Activated CD4-positive, alpha-beta T cell treated with anti-CD3 and anti-CD28 coated beads for 36 hours (primary cell): ENCODE measurements at regions of chr18 and their contacts with region 1.

Region 1: DNA sequence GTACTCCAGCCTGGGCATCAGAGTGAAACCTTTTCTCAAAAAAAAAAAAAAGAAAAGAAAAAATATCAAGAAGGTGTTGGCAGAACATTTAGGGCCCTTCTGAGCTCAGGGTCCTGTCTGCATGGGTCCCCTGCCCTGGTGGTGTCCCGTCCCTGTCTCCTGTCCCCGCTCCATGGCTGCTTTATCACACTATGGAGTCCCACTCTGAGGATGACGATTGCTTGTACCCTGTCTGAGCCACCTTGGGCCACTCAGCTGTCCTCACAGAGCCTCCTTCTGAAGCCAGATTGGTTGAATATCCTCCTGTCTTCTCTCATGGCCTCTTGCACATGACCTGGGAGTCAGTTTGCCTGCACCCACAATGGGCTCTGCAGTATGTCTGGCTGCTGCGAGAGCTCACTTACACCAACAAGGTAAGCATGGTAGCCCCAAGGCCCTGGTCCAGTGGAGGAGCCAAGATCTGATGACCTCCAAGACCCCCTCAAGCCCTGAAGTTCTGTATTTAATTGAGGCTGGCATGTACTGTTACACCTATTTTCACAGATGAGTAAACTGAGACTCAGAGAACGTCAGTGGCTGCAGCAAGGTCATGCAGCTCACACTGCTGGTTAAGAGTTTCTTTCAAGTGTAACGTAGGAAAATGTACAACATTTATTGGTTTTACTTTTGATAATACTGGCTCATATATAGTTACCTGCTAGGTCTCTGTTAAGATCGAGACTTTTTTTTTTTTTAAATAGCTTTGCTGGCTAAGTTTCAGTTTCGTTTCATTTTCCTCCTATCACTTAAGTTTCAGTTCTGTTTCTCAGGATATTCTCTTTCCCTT is 16.9 kb upstream of the ZCCHC2 start:
- DNase-seq: peak; percentile 66
- ATAC-seq: peak; percentile 99
- H3K4me3 Mint-ChIP-seq: peak overlapping the region; percentile 60
- H3K27ac Mint-ChIP-seq: peak overlapping the region; percentile 98
- H3K4me1 Mint-ChIP-seq: peaks cover 26% of the 10 kb centered on the region
- H3K27me3 Mint-ChIP-seq: no peaks in the 10 kb centered on the region

Region 2: GRCh38 chr18:62281684-62282083 is 224.2 kb before region 1 on chr18:
- CTCF ChIA-PET with region 1: no interaction called
- POLR2A ChIA-PET with region 1: no interaction called
- intact Hi-C with region 1: loop called in 1 of 2 experiments (anchors 5 kb)
- DNase-seq: no peak
- ATAC-seq: peak; percentile 52
- H3K4me3 Mint-ChIP-seq: no peak overlapping the region
- H3K27ac Mint-ChIP-seq: no peak overlapping the region
- H3K4me1 Mint-ChIP-seq: peaks cover 32% of the 10 kb centered on the region
- H3K27me3 Mint-ChIP-seq: no peaks in the 10 kb centered on the region

Region 3: GRCh38 chr18:62324917-62325805 is 180.7 kb before region 1 on chr18 and contains the start of gene TNFRSF11A:
- CTCF ChIA-PET with region 1: no interaction called
- POLR2A ChIA-PET with region 1: no interaction called
- intact Hi-C with region 1: loop called in 1 of 2 experiments (anchors 5 kb)
- DNase-seq: peak; percentile 85
- ATAC-seq: peak; percentile 77
- H3K4me3 Mint-ChIP-seq: peak within 1 kb of the TSS; percentile 78
- H3K27ac Mint-ChIP-seq: peak within 1 kb of the TSS; percentile 64
- H3K4me1 Mint-ChIP-seq: peaks cover 29% of the 10 kb centered on the region
- H3K27me3 Mint-ChIP-seq: peaks cover 70% of the 10 kb centered on the region
- total RNA-seq, gene TNFRSF11A: 6.9 to 9.3 TPM

Region 4: GRCh38 chr18:62464266-62464665 is 41.6 kb before region 1 on chr18:
- CTCF ChIA-PET with region 1: no interaction called
- POLR2A ChIA-PET with region 1: interaction called, 10 read pairs
- intact Hi-C with region 1: no loop called
- DNase-seq: no peak
- ATAC-seq: no peak
- H3K4me3 Mint-ChIP-seq: no peak overlapping the region
- H3K27ac Mint-ChIP-seq: no peak overlapping the region
- H3K4me1 Mint-ChIP-seq: no peaks in the 10 kb centered on the region
- H3K27me3 Mint-ChIP-seq: peaks cover 3% of the 10 kb centered on the region

Region 5: DNA sequence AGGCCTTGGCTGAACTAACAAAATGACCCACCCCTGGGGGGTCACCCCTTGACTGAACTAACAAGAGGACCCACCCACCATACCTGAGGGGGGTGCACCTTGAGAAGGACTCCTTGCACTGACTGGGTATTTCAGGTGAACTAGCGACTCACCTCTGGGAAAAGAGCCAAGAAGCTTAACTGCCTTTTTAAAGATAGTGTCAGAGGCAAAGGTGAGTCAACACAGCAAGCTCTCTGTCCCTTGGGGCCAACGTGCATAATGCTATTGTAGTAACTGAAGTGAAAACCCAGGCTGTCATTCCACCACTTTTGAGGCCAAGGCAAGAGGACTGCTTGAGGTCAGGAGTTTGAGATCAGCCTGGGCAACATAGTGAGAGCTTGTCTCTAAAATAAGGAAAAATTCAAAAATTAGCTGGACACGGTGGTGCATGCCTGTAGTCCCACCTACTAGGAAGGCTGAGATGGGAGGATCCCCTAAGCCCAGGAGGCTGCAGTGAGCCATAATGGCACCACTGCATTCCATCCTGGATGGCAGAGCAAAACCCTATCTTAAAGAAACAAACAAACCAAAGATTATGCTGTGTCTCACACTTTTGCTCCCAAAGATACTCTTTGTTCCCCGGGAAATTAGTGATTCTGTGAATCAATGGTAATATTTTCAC is 19.4 kb before region 1 on chr18:
- CTCF ChIA-PET with region 1: interaction called, 6 read pairs
- POLR2A ChIA-PET with region 1: interaction called, 5 read pairs
- intact Hi-C with region 1: loop called (anchors 1 kb)
- DNase-seq: peak; percentile 73
- ATAC-seq: peak; percentile 96
- H3K4me3 Mint-ChIP-seq: no peak overlapping the region
- H3K27ac Mint-ChIP-seq: no peak overlapping the region
- H3K4me1 Mint-ChIP-seq: peaks cover 16% of the 10 kb centered on the region
- H3K27me3 Mint-ChIP-seq: peaks cover 20% of the 10 kb centered on the region

Region 6: DNA sequence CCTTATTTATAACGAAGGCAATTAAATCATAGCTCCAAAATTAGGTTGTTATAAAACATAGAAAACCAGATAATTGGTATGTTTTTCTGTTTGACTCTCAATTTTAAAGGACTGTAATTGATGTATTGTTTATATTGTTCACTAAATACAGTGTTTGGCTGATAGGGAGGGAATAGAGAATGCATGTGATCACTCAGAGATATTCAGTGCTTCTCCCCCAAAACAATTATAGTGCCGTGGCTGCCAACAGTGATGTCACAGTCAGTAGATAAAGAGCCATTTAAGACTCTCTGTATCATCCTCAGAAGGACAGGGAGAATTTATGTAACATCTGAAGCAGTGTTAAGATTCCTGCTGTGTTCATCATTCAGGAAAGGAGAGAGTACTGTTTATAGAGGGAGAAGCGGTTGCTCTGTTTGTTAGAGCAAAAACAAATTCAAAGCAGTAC is 279.1 kb after region 1 on chr18:
- CTCF ChIA-PET with region 1: no interaction called
- POLR2A ChIA-PET with region 1: no interaction called
- intact Hi-C with region 1: loop called in 1 of 2 experiments (anchors 2 kb)
- DNase-seq: no peak
- ATAC-seq: peak; percentile 42
- H3K4me3 Mint-ChIP-seq: no peak overlapping the region
- H3K27ac Mint-ChIP-seq: no peak overlapping the region
- H3K4me1 Mint-ChIP-seq: peaks cover 55% of the 10 kb centered on the region
- H3K27me3 Mint-ChIP-seq: peaks cover 3% of the 10 kb centered on the region